ENCODE measurements at regions of chr6 and their contacts with region 1.

Region 1: GRCh38 chr6:169789982-169790927 is 38.8 kb downstream of the ERMARD start:
- DNase-seq: no peak
- H3K4me3 ChIP-seq: peak overlapping the region; percentile 70
- CTCF ChIP-seq: peak; percentile 99

Region 2: DNA sequence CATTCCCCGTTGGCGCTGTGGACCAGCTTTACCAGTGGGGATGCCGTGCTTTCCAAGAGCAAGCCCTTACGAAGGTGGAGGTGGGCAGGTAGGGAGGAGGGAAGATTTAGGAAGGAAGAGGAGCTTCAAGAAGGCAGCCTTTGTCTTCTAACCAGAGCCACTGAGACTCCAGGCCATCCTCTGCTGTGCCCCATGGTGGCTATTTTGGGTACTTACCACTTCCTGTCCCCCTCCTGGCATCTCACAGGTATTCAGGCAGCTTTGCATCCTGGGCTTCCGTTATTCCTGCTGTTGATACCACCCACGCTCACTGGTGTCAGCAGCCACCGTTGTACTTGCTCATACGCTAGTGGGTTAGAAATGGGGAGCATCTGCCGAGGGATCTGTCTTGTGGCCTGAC is 15.9 kb before region 1 on chr6:
- CTCF ChIA-PET with region 1: interaction called, 22 read pairs
- POLR2A ChIA-PET with region 1: no interaction called
- DNase-seq: no peak
- H3K4me3 ChIP-seq: no peak overlapping the region
- CTCF ChIP-seq: no peak

Region 3: GRCh38 chr6:169831450-169832246 is 41.4 kb after region 1 on chr6:
- CTCF ChIA-PET with region 1: interaction called, 12 read pairs
- POLR2A ChIA-PET with region 1: no interaction called
- DNase-seq: no peak
- H3K4me3 ChIP-seq: no peak overlapping the region
- CTCF ChIP-seq: peak; percentile 94

Region 4: DNA sequence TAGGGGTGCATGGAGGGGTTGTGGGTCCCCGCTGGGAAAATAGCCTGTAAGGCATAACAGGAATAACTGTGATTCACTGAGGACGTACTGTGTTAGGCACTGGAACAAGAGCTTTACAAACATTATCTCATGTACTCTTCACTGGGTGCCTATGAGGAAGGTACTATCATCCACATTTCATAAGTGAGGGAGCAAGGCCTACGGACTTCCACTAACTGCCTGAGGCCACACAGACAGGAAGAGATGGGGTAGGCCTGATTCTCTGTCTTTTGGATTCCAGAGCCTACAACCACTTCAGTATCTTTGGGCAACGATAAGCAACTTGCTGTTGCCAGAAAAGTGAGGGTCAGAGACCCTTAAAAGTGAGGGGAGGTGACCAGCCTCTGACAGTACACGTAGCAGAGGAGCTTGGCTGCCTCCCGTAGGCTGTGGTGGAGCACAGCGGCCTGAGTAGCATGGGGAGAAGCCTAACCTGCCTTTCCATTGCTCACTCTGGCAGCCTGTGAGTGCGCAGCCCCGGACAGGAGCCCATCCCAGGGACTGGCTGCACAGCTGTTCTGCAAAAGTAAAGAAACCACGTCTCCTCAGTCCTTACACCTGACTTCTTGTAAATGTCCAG is 732.4 kb after region 1 on chr6:
- CTCF ChIA-PET with region 1: interaction called, 156 read pairs
- POLR2A ChIA-PET with region 1: no interaction called
- DNase-seq: no peak
- H3K4me3 ChIP-seq: no peak overlapping the region
- CTCF ChIP-seq: peak; percentile 48